ENCODE measurements at regions of chr16 and their contacts with region 1.

Region 1: GRCh38 chr16:55842369-55843104 is 9.6 kb upstream of the CES1 start:
- DNase-seq: peak in 3 of 10 donors; percentile 14 to 30 (median 24)

Region 2: DNA sequence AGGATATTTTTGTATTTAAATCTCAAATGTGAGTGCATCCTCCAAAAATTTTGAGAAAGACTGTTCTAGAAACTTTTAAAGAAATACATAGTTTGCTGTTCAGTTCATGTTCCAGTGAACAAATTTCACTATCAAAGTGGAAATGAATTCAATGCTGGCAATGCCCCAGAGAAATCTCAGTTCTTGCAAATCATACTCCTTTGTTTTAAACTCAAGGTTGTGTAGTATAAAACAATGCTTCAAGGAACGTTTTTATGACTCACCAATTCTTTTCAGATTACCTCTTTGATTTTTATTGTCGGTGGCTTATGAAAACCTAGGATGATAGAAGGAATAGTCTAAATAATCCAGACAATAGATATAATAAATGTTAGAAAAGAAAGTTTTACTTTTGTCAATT is 316.1 kb before region 1 on chr16:
- intact Hi-C with region 1: no loop called
- DNase-seq: no peak

Region 3: GRCh38 chr16:55711959-55712876 is 130.3 kb before region 1 on chr16:
- intact Hi-C with region 1: loop called (anchors 1 kb)
- DNase-seq: peak in 8 of 10 donors; percentile 63 to 91 (median 76)

Region 4: GRCh38 chr16:55765161-55765560 is 77.4 kb before region 1 on chr16:
- intact Hi-C with region 1: no loop called
- DNase-seq: no peak

Region 5: DNA sequence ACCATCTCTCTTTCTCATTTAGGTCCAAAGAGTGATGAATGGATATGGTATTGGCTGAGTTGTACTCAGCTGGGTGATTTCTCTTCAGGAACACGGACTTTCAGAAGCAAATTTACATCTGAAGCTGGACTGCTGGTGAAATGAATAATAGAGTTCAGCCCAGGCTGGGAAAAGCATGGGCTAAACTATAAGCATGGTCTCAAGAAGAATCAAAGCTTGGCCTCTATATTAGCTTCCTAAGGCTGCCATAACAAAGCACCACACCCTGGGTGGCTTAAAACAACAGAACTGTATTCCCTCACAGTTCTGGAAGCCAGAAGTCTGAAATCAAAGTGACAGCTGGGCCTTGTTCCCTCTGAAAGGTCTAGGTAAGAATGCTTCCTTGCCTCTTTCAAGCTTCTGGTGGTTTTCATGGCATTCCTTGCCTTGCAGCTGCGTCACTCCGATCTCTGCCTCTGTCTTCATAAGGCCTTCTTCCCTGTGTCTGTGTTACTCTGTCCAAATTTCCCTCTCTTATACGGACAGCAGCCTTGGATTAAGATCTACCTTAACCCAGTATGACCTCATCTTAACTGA is 122.5 kb after region 1 on chr16:
- intact Hi-C with region 1: no loop called
- DNase-seq: no peak